Panc1 (cell line): ENCODE measurements at regions of chr2 and their contacts with region 1.

Region 1: DNA sequence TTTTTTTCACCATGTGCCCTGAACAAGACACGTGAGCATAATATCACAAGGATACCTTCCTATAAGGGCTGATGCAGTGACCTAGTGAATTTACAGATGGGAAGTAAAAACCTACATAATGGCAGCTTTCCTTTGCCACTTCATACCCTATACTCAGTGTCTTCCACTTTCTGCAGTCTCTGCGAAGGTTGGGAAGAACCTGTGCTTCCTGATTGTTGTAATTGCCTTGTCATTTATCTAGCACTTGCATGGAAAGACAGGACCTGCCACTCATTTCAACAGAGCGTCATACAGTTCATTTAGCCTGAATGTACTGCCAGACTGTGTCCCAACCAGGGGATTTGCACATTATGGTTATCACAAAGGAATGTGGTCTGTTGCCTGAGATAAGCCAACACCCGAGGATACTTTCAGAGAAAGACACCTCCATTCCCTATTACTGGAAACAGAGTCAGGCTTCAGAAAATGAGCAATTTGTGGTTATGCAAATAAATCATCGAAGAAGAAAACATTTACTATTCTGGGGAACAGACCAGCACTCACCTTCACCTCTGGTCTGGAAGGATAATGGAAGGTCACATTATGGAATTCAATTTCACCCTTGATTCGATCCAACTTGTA is 55.0 kb downstream of the ABCB11 start:
- DNase-seq: no peak
- ATAC-seq: peak; percentile 65; the same call in 1 of the 2 replicates
- H3K4me3 ChIP-seq: no peak overlapping the region
- H3K27ac ChIP-seq: no peak overlapping the region
- H3K4me1 ChIP-seq: no peaks in the 10 kb centered on the region
- H3K27me3 ChIP-seq: no peaks in the 10 kb centered on the region; the same call in 1 of the 2 replicates
- CTCF ChIP-seq: no peak

Region 2: DNA sequence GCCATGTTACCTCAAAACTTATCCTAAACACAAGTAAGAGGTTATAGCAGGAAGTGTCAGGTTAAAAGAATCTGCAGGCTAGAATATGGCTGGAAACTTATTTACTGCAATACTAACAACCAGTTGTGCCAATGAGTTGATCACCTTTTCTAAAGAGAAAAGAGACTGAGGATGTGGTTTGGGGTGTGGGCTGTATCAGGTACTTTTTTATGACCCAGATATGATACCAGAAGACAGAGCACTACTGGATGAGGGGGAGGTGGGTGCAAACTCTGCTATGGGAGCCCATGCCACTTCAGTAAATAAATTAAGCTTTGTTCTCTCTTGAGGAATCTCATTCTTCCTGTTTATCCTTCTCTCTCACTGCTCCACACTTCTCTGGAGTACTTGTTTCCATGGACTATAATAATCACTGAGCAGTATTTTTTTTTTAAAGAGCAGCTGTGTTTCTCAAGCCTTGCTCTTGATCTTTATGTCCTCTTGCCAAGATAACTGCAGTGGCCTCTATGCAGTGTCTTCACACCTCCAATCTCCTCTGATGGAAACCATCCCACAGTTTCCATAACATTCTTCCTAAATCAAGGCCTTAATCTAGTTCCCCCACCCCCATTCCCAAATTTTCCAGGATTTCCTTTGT is 224.9 kb before region 1 on chr2:
- CTCF ChIA-PET with region 1: no interaction called
- POLR2A ChIA-PET with region 1: interaction called, 13 read pairs
- in situ Hi-C with region 1: no loop called
- intact Hi-C with region 1: no loop called
- DNase-seq: no peak
- ATAC-seq: no peak
- H3K4me3 ChIP-seq: no peak overlapping the region
- H3K27ac ChIP-seq: no peak overlapping the region
- H3K4me1 ChIP-seq: no peaks in the 10 kb centered on the region
- H3K27me3 ChIP-seq: no peaks in the 10 kb centered on the region
- CTCF ChIP-seq: no peak

Region 3: GRCh38 chr2:169172076-169172735 is 196.1 kb after region 1 on chr2:
- CTCF ChIA-PET with region 1: no interaction called
- POLR2A ChIA-PET with region 1: interaction called, 20 read pairs
- in situ Hi-C with region 1: no loop called
- intact Hi-C with region 1: no loop called
- DNase-seq: no peak
- ATAC-seq: no peak
- H3K4me3 ChIP-seq: no peak overlapping the region
- H3K27ac ChIP-seq: no peak overlapping the region
- H3K4me1 ChIP-seq: no peaks in the 10 kb centered on the region
- H3K27me3 ChIP-seq: peaks cover 8% of the 10 kb centered on the region; the same call in 1 of the 2 replicates
- CTCF ChIP-seq: no peak